ENCODE measurements at regions of chr19 and their contacts with region 1.

Region 1: DNA sequence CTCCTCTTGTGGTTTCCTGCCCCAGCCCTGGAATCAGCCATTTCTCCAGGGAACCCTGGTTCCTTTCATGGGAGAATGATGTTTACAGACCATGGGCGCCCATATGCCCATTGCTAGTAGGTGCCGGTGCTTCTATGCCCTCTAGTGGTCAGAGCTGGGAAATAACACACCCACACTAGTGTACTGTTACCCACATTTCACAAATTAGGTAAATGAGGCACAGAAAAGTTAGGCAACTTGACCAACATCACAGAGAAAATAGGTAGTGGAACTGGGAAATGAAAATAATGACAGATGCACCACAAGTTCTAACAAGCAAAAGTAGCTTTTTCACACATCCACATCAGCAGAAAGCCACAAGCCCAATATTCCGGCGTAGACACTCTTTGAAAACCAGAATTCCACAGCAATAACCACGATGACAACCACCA is 1.3 kb upstream of the CEACAM3 start:
- DNase-seq: peak; percentile 76
- ATAC-seq: peak; percentile 93
- H3K4me3 Mint-ChIP-seq: no peak overlapping the region
- H3K27ac Mint-ChIP-seq: no peak overlapping the region
- H3K4me1 Mint-ChIP-seq: peaks cover 4% of the 10 kb centered on the region
- H3K27me3 Mint-ChIP-seq: peaks cover 11% of the 10 kb centered on the region
- CTCF ChIP-seq: peak; percentile 86

Region 2: DNA sequence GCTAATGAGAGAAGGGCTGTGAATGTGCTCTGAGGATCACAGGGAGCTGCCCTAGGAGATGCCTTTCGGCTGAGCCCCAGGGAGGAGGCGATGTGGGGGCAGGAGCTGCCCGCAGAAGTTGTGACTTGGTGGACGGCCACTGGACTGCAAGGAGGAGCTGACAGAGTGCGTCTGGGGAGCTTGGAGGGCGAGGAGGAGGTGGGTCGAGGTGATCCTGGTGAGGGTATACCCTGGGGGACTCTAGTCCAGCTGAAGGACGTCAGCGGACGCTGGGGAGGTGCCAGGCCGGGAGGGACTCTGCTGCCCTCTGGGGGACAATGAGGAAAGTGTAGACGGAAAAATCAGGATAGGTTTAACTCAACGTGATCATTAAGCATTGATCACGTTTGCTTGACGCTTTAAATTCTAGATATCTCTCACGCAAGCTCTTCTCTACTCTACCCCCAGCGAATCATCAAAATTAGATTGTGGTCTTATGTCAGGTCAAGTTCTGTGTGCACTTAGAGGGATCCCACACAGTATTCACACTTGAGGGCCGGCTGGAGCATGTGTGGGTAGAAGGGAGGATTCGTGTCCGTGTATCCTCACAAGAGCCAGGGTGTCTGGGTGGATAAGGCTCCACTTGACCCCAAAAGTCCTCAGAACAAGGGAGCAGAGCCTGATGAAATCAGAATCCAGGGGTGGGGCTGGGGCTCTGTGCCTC is 103.6 kb before region 1 on chr19:
- CTCF ChIA-PET with region 1: interaction called, 11 read pairs
- POLR2A ChIA-PET with region 1: no interaction called
- DNase-seq: peak; percentile 69
- ATAC-seq: peak; percentile 86
- H3K4me3 Mint-ChIP-seq: no peak overlapping the region; the same call in 1 of the 2 replicates
- H3K27ac Mint-ChIP-seq: no peak overlapping the region
- H3K4me1 Mint-ChIP-seq: peaks cover 2% of the 10 kb centered on the region; the same call in 1 of the 2 replicates
- H3K27me3 Mint-ChIP-seq: peaks cover 39% of the 10 kb centered on the region
- CTCF ChIP-seq: peak; percentile 61

Region 3: DNA sequence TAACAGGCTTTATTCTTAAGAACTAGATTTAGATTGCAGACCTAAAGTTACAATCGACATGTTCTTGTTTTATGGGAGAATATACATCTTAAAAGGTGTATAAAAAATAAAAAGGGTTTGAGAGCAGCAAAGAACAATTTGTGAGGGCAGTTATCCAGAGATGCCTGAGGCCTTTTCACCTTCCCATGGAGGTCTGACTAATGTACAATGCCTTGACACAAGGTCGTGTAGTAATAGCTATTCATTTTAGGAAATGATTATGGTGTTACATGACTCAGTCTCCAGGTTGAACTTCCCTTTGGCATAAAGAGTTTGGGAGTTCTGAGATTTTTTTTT is 19.7 kb before region 1 on chr19:
- CTCF ChIA-PET with region 1: interaction called, 36 read pairs
- POLR2A ChIA-PET with region 1: no interaction called
- DNase-seq: no peak
- ATAC-seq: no peak
- H3K4me3 Mint-ChIP-seq: no peak overlapping the region
- H3K27ac Mint-ChIP-seq: no peak overlapping the region
- H3K4me1 Mint-ChIP-seq: peaks cover 17% of the 10 kb centered on the region
- H3K27me3 Mint-ChIP-seq: no peaks in the 10 kb centered on the region; the same call in 1 of the 2 replicates
- CTCF ChIP-seq: no peak

Region 4: DNA sequence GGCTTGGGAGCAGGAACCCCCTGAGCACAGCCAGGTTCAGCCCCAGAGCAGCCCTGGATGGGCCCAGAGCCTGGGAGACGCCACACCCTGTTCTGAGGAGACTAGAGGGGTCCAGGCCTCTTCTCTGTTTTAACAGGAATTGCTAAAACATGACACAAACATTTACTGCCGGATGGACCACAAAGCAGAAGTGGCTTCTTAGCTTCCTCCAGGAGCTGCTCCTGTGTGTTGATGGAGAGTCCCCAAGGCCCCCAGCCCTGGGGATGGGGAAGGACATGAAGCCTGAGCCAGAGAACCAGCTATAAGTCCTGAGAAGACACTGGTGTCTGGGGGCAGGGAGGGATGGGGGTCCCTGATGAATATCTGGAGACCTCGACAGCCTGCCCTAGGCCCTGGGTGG is 16.0 kb after region 1 on chr19:
- CTCF ChIA-PET with region 1: interaction called, 24 read pairs
- POLR2A ChIA-PET with region 1: no interaction called
- DNase-seq: no peak
- ATAC-seq: no peak
- H3K4me3 Mint-ChIP-seq: no peak overlapping the region
- H3K27ac Mint-ChIP-seq: no peak overlapping the region
- H3K4me1 Mint-ChIP-seq: no peaks in the 10 kb centered on the region
- H3K27me3 Mint-ChIP-seq: no peaks in the 10 kb centered on the region; the same call in 1 of the 2 replicates
- CTCF ChIP-seq: no peak

Region 5: GRCh38 chr19:41821003-41821735 is 26.1 kb after region 1 on chr19:
- CTCF ChIA-PET with region 1: interaction called, 190 read pairs
- POLR2A ChIA-PET with region 1: no interaction called
- DNase-seq: peak; percentile 66
- ATAC-seq: peak; percentile 99
- H3K4me3 Mint-ChIP-seq: no peak overlapping the region
- H3K27ac Mint-ChIP-seq: no peak overlapping the region
- H3K4me1 Mint-ChIP-seq: no peaks in the 10 kb centered on the region
- H3K27me3 Mint-ChIP-seq: peaks cover 4% of the 10 kb centered on the region; the same call in 1 of the 2 replicates
- CTCF ChIP-seq: peak; percentile 37; the same call in 1 of the 2 replicates

Region 6: GRCh38 chr19:41837981-41838708 is 43.1 kb after region 1 on chr19:
- CTCF ChIA-PET with region 1: interaction called, 21 read pairs
- POLR2A ChIA-PET with region 1: interaction called, 4 read pairs
- DNase-seq: no peak
- ATAC-seq: no peak
- H3K4me3 Mint-ChIP-seq: no peak overlapping the region
- H3K27ac Mint-ChIP-seq: no peak overlapping the region
- H3K4me1 Mint-ChIP-seq: no peaks in the 10 kb centered on the region
- H3K27me3 Mint-ChIP-seq: peaks cover 31% of the 10 kb centered on the region
- CTCF ChIP-seq: no peak

Region 7: GRCh38 chr19:41928221-41928683 is 133.2 kb after region 1 on chr19 and contains the start of gene ERFL:
- CTCF ChIA-PET with region 1: no interaction called
- POLR2A ChIA-PET with region 1: no interaction called
- DNase-seq: no peak
- ATAC-seq: peak; percentile 13
- H3K4me3 Mint-ChIP-seq: peak within 1 kb of the TSS; percentile 72
- H3K27ac Mint-ChIP-seq: no peak within 1 kb of the TSS
- H3K4me1 Mint-ChIP-seq: peaks cover 31% of the 10 kb centered on the region
- H3K27me3 Mint-ChIP-seq: peaks cover 47% of the 10 kb centered on the region
- CTCF ChIP-seq: no peak
- total RNA-seq, gene ERFL: 0.30 to 0.66 TPM (median 0.31 TPM) in 3 replicates

Region 8: DNA sequence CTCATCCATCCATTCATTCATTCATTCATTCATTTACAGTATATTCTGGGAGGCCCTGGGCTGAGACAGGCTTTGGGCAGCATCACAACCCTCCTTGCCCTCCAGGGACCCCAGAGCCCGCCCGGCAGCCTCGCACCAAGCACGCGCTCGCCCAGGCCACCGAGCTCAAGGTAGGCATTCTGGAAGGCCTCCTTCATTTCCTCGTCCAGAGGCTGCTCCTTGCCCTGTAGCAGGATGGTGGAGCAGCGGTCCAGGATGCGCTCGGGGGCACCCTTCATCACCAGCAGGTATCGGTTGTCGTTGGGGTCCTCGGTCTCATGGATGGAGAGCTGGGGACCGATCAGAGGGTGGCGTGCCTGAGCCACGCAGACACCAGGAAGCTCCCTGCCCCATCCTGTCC is 183.4 kb after region 1 on chr19:
- CTCF ChIA-PET with region 1: no interaction called
- POLR2A ChIA-PET with region 1: no interaction called
- DNase-seq: no peak
- ATAC-seq: no peak
- H3K4me3 Mint-ChIP-seq: no peak overlapping the region
- H3K27ac Mint-ChIP-seq: no peak overlapping the region
- H3K4me1 Mint-ChIP-seq: no peaks in the 10 kb centered on the region
- H3K27me3 Mint-ChIP-seq: no peaks in the 10 kb centered on the region
- CTCF ChIP-seq: no peak

Measured in WTC11 (cell line).